ENCODE measurements at regions of chr1 and their contacts with region 1.

Region 1: GRCh38 chr1:209576798-209577197 is 6.7 kb upstream of the CAMK1G start:
- ATAC-seq: peak; percentile 99 to 100 (median 100)
- H3K4me3 ChIP-seq: no peak overlapping the region
- H3K27ac ChIP-seq: no peak overlapping the region
- H3K4me1 ChIP-seq: no peaks in the 10 kb centered on the region

Region 2: GRCh38 chr1:209692745-209693504 is 116.1 kb after region 1 on chr1:
- in situ Hi-C with region 1: loop called in 8 of 9 experiments (anchors 10 to 25 kb)
- ATAC-seq: peak; percentile 46 to 78 (median 66)
- H3K4me3 ChIP-seq: no peak overlapping the region
- H3K27ac ChIP-seq: no peak overlapping the region
- H3K4me1 ChIP-seq: peaks cover 3% of the 10 kb centered on the region in 2 donors

Region 3: DNA sequence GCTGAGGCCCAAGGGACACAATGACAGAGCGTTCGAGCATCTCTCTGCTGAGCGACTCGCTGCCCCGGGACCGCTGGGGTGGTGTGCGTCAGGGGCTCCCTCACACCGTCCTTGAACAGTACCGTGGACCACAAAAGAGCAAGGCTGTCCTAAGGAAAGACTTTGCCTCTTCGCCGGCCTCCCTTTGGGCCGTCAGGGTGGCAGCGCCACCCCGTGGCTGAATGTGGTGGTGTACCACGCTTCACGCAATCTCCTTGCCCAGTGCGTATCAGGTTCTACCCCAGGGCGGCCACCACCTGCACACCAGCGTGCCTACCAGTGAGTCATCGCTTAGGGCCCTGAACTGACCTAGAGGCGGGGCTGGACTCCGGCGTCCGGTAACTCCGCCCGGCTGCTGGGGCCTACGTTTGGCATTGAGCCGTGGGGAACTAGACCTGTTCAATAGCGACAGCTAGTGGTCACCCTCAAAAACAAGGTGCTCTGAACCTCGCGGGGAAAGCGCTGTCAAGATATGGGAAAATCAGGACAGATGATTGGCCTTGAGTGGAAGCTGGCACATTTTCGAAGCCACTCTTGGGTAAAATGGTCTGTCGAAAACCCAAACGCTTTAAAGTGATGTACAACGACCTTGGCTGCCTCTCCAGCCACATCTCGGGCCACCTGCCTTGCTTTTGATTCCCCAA is 170.9 kb after region 1 on chr1:
- in situ Hi-C with region 1: loop called in 1 of 9 experiments (anchors 5 kb)
- ATAC-seq: peak; percentile 68 to 100 (median 97)
- H3K4me3 ChIP-seq: peak overlapping the region in 1 of 5 donors; percentile 10
- H3K27ac ChIP-seq: no peak overlapping the region
- H3K4me1 ChIP-seq: peaks cover 0 to 6% of the 10 kb centered on the region in 2 donors